PC-9 (cell line): ENCODE measurements at regions of chr4 and their contacts with region 1.

Region 1: DNA sequence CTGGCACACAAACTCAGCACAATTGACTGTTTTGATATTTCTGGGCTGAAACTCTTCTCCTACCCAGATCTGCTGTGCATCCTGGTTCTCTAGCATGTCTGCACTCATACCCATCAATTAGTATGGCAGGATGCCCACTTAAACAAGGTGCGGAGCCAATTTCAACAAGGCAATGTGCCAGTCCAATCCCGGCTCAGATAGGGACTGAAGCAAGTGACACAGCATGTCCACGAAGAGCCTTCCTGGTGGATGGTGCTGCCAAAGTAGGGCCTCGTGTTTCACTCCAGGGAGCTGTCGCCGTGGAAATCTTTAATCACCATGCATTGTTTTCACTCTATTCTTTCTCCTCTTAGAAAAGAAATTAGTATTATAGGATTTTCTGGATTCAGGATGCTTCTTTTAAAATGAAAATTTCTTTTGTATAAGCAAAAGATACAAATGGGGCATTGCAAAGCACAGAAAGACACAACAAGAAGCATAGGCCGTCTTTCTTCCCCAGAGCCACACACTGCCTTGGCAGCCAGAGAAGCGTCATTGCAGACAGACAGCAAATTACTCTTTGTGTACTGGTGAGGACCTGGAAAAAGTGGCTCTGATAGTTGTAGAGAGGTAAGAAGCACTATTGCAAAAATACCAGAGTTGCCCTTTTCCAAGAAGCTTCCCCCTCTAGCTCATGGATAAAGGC is 40.6 kb upstream of the LSM6 start:
- DNase-seq: no peak
- H3K4me3 ChIP-seq: no peak overlapping the region
- H3K27ac ChIP-seq: no peak overlapping the region
- H3K4me1 ChIP-seq: no peaks in the 10 kb centered on the region
- H3K27me3 ChIP-seq: no peaks in the 10 kb centered on the region
- CTCF ChIP-seq: no peak

Region 2: GRCh38 chr4:146108756-146109155 is 26.1 kb before region 1 on chr4:
- CTCF ChIA-PET with region 1: no interaction called
- POLR2A ChIA-PET with region 1: no interaction called
- intact Hi-C with region 1: loop called (anchors 1 kb)
- DNase-seq: no peak
- H3K4me3 ChIP-seq: no peak overlapping the region
- H3K27ac ChIP-seq: no peak overlapping the region
- H3K4me1 ChIP-seq: no peaks in the 10 kb centered on the region
- H3K27me3 ChIP-seq: no peaks in the 10 kb centered on the region
- CTCF ChIP-seq: no peak